GM12878 (cell line): ENCODE measurements at regions of chr17 and their contacts with region 1.

Region 1: GRCh38 chr17:3723556-3724369 is at the start of gene HASPIN:
- DNase-seq: peak; percentile 62
- ATAC-seq: peak; percentile 93
- H3K4me3 ChIP-seq: peak within 1 kb of the TSS; percentile 93
- H3K27ac ChIP-seq: peak within 1 kb of the TSS; percentile 87
- H3K4me1 ChIP-seq: peaks cover 17% of the 10 kb centered on the region
- H3K27me3 ChIP-seq: no peaks in the 10 kb centered on the region
- CTCF ChIP-seq: peak in 2 of 3 experiments; percentile 12 to 17; a peak in 1 of 6 replicates
- EP300 ChIP-seq: no peak
- POLR2A ChIP-seq: peak; percentile 83
- RAD21 ChIP-seq: no peak
- polyA plus RNA-seq, gene HASPIN: 0.80 to 0.97 TPM

Region 2: DNA sequence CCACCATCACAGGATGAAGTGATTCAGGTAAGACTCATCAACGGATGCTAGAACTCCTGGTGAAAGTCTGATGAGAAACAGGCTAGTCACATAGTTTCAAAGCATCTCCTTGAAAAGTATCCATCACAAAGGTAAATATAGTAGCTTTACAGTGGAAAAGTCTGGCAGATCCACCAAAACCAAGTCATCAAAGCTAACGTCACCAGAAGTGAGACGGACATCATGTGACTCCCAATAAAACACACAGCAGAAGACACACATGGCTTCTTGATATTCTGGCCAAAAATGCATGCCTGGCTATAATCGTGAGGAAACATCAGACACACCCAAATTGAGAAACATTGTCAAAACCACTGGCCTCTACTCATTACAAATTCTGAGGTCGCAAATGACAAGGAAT is 148.3 kb before region 1 on chr17:
- CTCF ChIA-PET with region 1: no interaction called
- POLR2A ChIA-PET with region 1: no interaction called
- RAD21 ChIA-PET with region 1: no interaction called
- SMC1A ChIA-PET with region 1: no interaction called
- in situ Hi-C with region 1: no loop called
- intact Hi-C with region 1: no loop called
- DNase-seq: no peak
- ATAC-seq: no peak
- H3K4me3 ChIP-seq: no peak overlapping the region
- H3K27ac ChIP-seq: no peak overlapping the region
- H3K4me1 ChIP-seq: no peaks in the 10 kb centered on the region
- H3K27me3 ChIP-seq: no peaks in the 10 kb centered on the region
- CTCF ChIP-seq: no peak
- EP300 ChIP-seq: no peak
- POLR2A ChIP-seq: no peak
- RAD21 ChIP-seq: no peak

Region 3: DNA sequence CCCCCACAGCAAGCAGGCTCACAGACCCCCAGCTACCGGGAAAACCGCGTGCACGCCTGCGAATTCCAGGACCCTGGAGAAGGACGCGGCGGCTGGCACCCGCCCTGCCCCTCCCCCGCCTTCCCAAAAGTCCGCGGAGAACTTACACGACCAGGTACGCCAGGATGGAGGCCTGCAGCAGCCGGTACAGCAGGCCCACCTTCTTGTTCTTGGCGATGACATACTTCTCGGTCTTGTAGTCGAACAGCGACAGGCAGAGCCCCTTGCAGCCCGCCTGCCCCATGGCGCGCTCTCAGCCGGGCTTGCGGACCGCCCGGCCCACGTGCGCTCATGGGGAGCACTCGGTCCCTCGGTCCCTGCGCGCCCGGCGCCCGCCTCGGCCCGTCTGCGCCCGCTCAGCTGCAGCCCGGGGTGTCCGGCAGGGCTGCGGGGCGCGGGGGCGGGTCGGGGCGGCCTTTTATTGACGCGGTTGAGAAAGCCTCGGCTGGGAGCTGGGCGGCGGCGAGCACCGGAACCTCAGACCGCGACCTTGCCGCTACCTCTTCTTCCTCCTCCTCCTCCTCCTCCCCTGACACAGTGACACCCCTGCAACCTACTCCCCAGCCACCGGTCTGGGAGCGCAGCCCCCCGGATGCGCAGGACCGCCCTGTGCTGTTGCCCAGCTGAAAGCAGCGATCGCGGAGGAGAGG is 27.9 kb before region 1 on chr17 and contains the start of gene P2RX5:
- CTCF ChIA-PET with region 1: interaction called, 7 read pairs
- POLR2A ChIA-PET with region 1: interaction called, 4 read pairs
- RAD21 ChIA-PET with region 1: interaction called, 13 read pairs
- SMC1A ChIA-PET with region 1: interaction called, 9 read pairs
- in situ Hi-C with region 1: no loop called
- intact Hi-C with region 1: loop called (anchors 5 kb)
- DNase-seq: no peak
- ATAC-seq: peak; percentile 48
- H3K4me3 ChIP-seq: peak within 1 kb of the TSS; percentile 56
- H3K27ac ChIP-seq: peak within 1 kb of the TSS; percentile 61
- H3K4me1 ChIP-seq: peaks cover 32% of the 10 kb centered on the region
- H3K27me3 ChIP-seq: no peaks in the 10 kb centered on the region
- CTCF ChIP-seq: no peak
- EP300 ChIP-seq: no peak
- POLR2A ChIP-seq: peak; percentile 71
- RAD21 ChIP-seq: no peak
- polyA plus RNA-seq, gene P2RX5: 6.9 to 14.2 TPM

Region 4: DNA sequence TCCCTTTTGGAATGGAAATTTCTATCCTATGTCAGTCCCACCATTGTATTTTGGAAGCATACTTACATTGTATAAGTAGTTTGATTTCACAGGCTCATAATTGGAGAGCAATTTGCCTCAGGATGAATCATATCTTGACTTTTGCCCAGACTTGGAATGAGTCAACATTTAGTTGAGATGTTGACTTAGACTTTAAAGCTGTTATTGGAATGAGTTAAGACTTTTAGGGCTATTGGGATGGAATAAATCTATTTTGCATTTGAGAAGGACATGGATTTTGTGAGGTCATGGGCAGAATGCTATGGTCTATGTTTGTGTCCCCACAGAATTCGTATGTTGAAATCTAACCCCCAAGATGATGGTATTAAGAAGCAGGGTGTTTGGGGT is 1480.1 kb after region 1 on chr17:
- CTCF ChIA-PET with region 1: no interaction called
- POLR2A ChIA-PET with region 1: no interaction called
- RAD21 ChIA-PET with region 1: no interaction called
- SMC1A ChIA-PET with region 1: no interaction called
- in situ Hi-C with region 1: loop called (anchors 25 kb)
- intact Hi-C with region 1: no loop called
- DNase-seq: no peak
- ATAC-seq: no peak
- H3K4me3 ChIP-seq: no peak overlapping the region
- H3K27ac ChIP-seq: no peak overlapping the region
- H3K4me1 ChIP-seq: peaks cover 26% of the 10 kb centered on the region
- H3K27me3 ChIP-seq: no peaks in the 10 kb centered on the region
- CTCF ChIP-seq: no peak
- EP300 ChIP-seq: no peak
- POLR2A ChIP-seq: no peak
- RAD21 ChIP-seq: no peak